Activated T-helper 2 cell treated with anti-CD3 and anti-CD28 coated beads, Interferon-gamma antibody, Interleukin-2, Interleukin-4, amounts not matched to agents 10 μg/mL and 5 μg/mL and 100 μg/mL, durations not matched to agents 14 hours and 24 hours and 36 hours (primary cell): ENCODE measurements at regions of chr11 and their contacts with region 1.

Region 1: GRCh38 chr11:14358729-14359439 is at the start of gene RRAS2:
- DNase-seq: peak; percentile 74
- H3K4me3 Mint-ChIP-seq: peak within 1 kb of the TSS; percentile 95
- H3K27ac Mint-ChIP-seq: peak within 1 kb of the TSS; percentile 94
- H3K4me1 Mint-ChIP-seq: peaks cover 42% of the 10 kb centered on the region
- H3K27me3 Mint-ChIP-seq: peaks cover 14% of the 10 kb centered on the region
- total RNA-seq, gene RRAS2: 64.4 and 65.2 TPM in 2 replicates

Region 2: GRCh38 chr11:14308114-14308896 is 50.6 kb before region 1 on chr11:
- intact Hi-C with region 1: loop called (anchors 5 kb)
- DNase-seq: no peak
- H3K4me3 Mint-ChIP-seq: no peak overlapping the region
- H3K27ac Mint-ChIP-seq: no peak overlapping the region
- H3K4me1 Mint-ChIP-seq: peaks cover 11% of the 10 kb centered on the region
- H3K27me3 Mint-ChIP-seq: no peaks in the 10 kb centered on the region

Region 3: DNA sequence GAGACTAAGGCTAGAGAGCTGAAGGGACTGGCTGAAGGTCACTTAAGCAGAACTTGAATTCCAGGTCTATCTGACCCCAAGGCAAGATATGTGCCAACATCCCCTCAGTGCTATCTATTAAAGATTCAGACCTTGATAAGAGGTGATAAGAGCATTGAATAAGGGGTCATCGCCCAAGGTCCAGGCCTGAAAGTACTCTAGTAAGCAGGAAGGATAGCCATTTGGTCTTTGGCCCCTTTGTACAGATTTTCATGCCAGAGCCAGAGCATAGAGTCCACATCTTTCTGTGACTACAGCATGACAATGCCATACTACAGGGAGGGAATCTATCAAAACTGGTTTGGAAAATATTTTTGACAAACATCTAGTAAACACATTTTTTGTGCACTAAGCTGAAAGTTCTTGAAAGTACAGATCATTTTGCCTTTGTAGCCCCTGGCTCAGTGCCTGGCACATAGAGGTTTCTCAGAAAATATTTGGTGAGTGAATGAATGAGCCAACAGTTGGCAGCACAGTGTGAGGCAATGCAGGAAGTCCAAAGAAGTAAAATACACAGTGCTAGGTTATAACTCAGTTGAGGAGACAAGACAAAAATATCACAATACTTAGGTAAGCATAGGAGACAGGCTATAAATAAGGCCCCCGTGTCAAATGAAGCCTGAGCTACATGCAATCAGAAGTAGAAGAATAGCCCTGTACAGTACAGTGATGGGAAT is 15.2 kb after region 1 on chr11:
- intact Hi-C with region 1: loop called (anchors 1 kb)
- DNase-seq: no peak
- H3K4me3 Mint-ChIP-seq: no peak overlapping the region
- H3K27ac Mint-ChIP-seq: peak overlapping the region; percentile 78
- H3K4me1 Mint-ChIP-seq: peaks cover 63% of the 10 kb centered on the region
- H3K27me3 Mint-ChIP-seq: peaks cover 5% of the 10 kb centered on the region

Region 4: DNA sequence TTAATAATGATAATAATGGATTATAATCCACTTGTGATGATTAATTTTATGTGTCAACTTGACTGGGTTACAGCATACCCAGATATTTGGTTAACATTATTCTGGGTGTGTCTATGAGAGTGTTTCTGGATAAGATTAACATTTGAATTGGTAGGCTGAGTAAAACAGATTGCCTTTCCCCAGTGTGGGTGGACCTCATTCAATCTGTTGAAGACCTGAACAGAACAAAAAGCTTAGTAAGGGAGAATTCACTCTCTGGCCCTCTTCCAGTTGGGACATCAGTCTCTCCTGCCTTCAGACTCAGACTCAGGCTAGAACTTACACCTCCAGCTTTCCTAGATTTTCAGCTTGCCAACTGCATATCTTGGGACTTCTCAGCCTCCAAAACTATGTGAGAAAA is 37.4 kb after region 1 on chr11:
- intact Hi-C with region 1: no loop called
- DNase-seq: no peak
- H3K4me3 Mint-ChIP-seq: no peak overlapping the region
- H3K27ac Mint-ChIP-seq: no peak overlapping the region
- H3K4me1 Mint-ChIP-seq: peaks cover 3% of the 10 kb centered on the region
- H3K27me3 Mint-ChIP-seq: peaks cover 23% of the 10 kb centered on the region

Region 5: DNA sequence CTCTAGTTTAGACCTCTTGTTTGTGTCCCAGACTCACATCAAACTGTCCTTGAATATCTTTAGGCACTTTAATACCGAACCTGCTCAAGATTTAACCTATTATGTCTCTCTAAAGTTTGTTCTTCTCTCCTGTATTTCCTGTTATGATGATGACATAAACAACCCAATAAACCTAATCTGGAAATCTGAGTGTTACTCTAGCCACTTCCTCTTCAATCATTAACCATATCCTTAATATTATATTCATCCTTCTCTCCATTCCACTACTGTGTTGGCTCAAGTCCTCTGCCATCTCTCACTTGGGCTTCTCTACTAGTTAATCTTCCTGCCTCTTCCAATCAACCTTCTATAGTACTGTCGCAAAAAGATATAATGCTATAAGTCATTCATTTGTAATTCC is 104.7 kb after region 1 on chr11:
- intact Hi-C with region 1: no loop called
- DNase-seq: no peak
- H3K4me3 Mint-ChIP-seq: no peak overlapping the region
- H3K27ac Mint-ChIP-seq: no peak overlapping the region
- H3K4me1 Mint-ChIP-seq: peaks cover 18% of the 10 kb centered on the region
- H3K27me3 Mint-ChIP-seq: no peaks in the 10 kb centered on the region